HCT116 (cell line): ENCODE measurements at regions of chr3 and their contacts with region 1.

Region 1: DNA sequence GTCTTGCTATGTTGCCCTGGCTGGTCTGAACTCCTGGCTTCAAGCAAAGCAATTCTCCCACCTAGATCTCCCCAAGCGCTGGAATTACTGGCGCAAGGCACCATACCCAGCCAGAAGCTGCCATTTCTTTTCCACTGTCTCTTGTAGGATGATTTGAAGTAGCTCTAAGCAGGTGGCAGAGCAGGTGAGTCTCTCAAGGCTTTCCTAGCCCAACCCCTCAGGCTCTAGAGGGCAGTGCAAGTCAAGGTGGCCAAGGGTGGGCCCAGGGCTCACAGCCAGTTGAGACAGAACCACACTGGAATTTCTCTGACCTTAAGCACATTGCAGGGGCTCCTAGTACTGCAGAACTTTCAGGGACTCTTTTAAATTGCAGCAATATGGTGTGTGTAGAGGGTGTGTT is 15.6 kb upstream of the DAG1 start:
- DNase-seq: peak; percentile 52
- ATAC-seq: peak; percentile 93
- H3K4me3 ChIP-seq: no peak overlapping the region
- H3K27ac ChIP-seq: no peak overlapping the region
- H3K4me1 ChIP-seq: peaks cover 0 to 24% of the 10 kb centered on the region in 2 experiments; a peak in 2 of 4 replicates
- H3K27me3 ChIP-seq: no peaks in the 10 kb centered on the region
- CTCF ChIP-seq: peak; percentile 51 to 74 (median 54); a peak in 5 of 6 replicates
- POLR2A ChIP-seq: no peak
- RAD21 ChIP-seq: peak; percentile 90

Region 2: GRCh38 chr3:49133226-49133951 is 321.1 kb before region 1 on chr3:
- CTCF ChIA-PET with region 1: interaction called, 12 read pairs
- POLR2A ChIA-PET with region 1: no interaction called
- RAD21 ChIA-PET with region 1: interaction called in 1 of 2 experiments, 8 read pairs
- intact Hi-C with region 1: loop called (anchors 1 kb)
- DNase-seq: peak; percentile 74
- ATAC-seq: peak; percentile 76
- H3K4me3 ChIP-seq: peak overlapping the region; percentile 70 to 91
- H3K27ac ChIP-seq: peak overlapping the region; percentile 89
- H3K4me1 ChIP-seq: peaks cover 16 to 46% of the 10 kb centered on the region in 2 experiments
- H3K27me3 ChIP-seq: no peaks in the 10 kb centered on the region
- CTCF ChIP-seq: no peak
- POLR2A ChIP-seq: no peak
- RAD21 ChIP-seq: no peak

Region 3: GRCh38 chr3:49295489-49296058 is 158.9 kb before region 1 on chr3:
- CTCF ChIA-PET with region 1: interaction called, 3 read pairs
- POLR2A ChIA-PET with region 1: no interaction called
- RAD21 ChIA-PET with region 1: interaction called in 1 of 2 experiments, 3 read pairs
- intact Hi-C with region 1: loop called (anchors 1 kb)
- DNase-seq: peak; percentile 22
- ATAC-seq: peak; percentile 60
- H3K4me3 ChIP-seq: no peak overlapping the region
- H3K27ac ChIP-seq: no peak overlapping the region
- H3K4me1 ChIP-seq: no peaks in the 10 kb centered on the region
- H3K27me3 ChIP-seq: no peaks in the 10 kb centered on the region
- CTCF ChIP-seq: peak; percentile 55 to 75 (median 65); a peak in 5 of 6 replicates
- POLR2A ChIP-seq: no peak
- RAD21 ChIP-seq: peak; percentile 70

Region 4: GRCh38 chr3:49411968-49412631 is 42.4 kb before region 1 on chr3 and contains the starts of genes RHOA and TCTA:
- CTCF ChIA-PET with region 1: interaction called, 12 read pairs
- POLR2A ChIA-PET with region 1: no interaction called
- RAD21 ChIA-PET with region 1: interaction called, 3 to 4 read pairs
- intact Hi-C with region 1: loop called (anchors 1 kb)
- DNase-seq: peak; percentile 100
- ATAC-seq: peak; percentile 88
- H3K4me3 ChIP-seq: peak within 1 kb of the TSS; percentile 94 to 95
- H3K27ac ChIP-seq: peak within 1 kb of the TSS; percentile 95
- H3K4me1 ChIP-seq: peaks cover 31 to 58% of the 10 kb centered on the region in 2 experiments; a peak in 3 of 4 replicates
- H3K27me3 ChIP-seq: no peaks in the 10 kb centered on the region
- CTCF ChIP-seq: no peak
- POLR2A ChIP-seq: peak; percentile 98
- RAD21 ChIP-seq: no peak
- total RNA-seq, gene RHOA: 497 TPM
- total RNA-seq, gene TCTA: 11.9 TPM

Region 5: GRCh38 chr3:49673715-49674496 is 219.4 kb after region 1 on chr3 and contains the start of gene APEH:
- CTCF ChIA-PET with region 1: interaction called, 15 read pairs
- POLR2A ChIA-PET with region 1: no interaction called
- RAD21 ChIA-PET with region 1: interaction called in 1 of 2 experiments, 6 read pairs
- intact Hi-C with region 1: loop called (anchors 1 kb)
- DNase-seq: peak; percentile 97
- ATAC-seq: peak; percentile 82
- H3K4me3 ChIP-seq: peak within 1 kb of the TSS; percentile 90 to 98
- H3K27ac ChIP-seq: peak within 1 kb of the TSS; percentile 98
- H3K4me1 ChIP-seq: peaks cover 10 to 36% of the 10 kb centered on the region in 2 experiments; a peak in 3 of 4 replicates
- H3K27me3 ChIP-seq: no peaks in the 10 kb centered on the region
- CTCF ChIP-seq: no peak
- POLR2A ChIP-seq: peak; percentile 71
- RAD21 ChIP-seq: no peak
- total RNA-seq, gene APEH: 246 TPM